OCI-LY7 (cell line): ENCODE measurements at regions of chr5 and their contacts with region 1.

Region 1: DNA sequence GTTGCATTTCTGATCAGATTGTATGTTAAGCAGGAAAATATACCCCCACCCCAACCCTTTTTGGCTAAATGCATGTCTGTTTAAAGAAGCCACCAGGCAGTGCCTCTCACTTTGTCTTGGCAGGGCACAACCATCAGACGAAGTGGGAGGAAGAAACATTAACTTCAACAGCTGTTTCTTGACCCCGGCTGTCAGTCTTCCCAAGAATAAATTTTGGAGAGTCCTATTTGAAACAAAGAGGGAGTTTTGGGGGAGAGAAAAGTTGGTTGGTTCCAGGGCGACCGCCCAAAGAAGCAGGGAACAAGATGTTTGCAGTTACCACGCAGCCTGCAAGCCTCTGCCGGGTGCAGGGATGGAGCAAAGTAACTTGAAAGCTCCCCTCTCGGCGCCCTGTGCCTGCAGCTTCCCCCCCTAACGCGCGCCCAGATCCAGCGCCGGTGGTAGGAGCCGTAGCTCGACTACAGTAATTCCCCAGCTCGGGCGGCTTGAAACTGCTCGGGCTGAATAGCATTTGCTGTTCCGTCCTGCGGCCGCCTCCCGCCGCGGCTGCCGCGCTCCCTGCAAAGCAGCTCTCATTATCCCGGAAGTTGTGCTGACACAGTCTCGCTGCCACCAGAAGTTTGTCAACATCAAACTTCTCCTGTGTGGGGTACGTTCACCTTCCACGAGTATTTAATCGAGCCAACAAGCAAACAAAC is 100.7 kb upstream of the SSBP2 start:
- DNase-seq: peak; percentile 98
- H3K4me3 ChIP-seq: peak overlapping the region; percentile 82
- H3K27ac ChIP-seq: peak overlapping the region; percentile 92
- H3K4me1 ChIP-seq: peaks cover 62% of the 10 kb centered on the region
- CTCF ChIP-seq: no peak

Region 2: GRCh38 chr5:81425569-81425968 is 426.1 kb before region 1 on chr5:
- CTCF ChIA-PET with region 1: no interaction called
- POLR2A ChIA-PET with region 1: interaction called, 5 read pairs
- intact Hi-C with region 1: loop called (anchors 5 kb)
- DNase-seq: peak; percentile 75
- H3K4me3 ChIP-seq: no peak overlapping the region
- H3K27ac ChIP-seq: peak overlapping the region; percentile 24
- H3K4me1 ChIP-seq: peaks cover 13% of the 10 kb centered on the region
- CTCF ChIP-seq: peak; percentile 91

Region 3: DNA sequence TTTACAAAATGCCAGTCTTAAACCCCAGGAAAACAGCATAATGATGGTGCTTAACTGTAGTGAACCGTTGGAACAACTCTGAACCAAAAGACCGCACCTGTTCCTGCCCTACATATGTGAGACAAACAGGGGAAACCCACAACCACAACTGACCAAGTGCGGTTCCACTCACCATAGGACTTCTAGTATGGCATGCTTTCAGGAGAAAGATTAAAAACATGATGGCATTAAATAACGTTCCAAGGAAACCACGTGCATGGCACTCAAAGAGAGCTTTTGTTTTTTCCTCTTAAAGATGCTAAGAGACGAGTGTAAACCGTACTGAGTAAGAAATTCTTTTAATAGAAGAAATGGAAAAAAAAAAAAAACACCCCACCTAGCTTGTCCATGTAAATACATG is 220.5 kb before region 1 on chr5:
- CTCF ChIA-PET with region 1: no interaction called
- POLR2A ChIA-PET with region 1: interaction called, 5 read pairs
- intact Hi-C with region 1: loop called (anchors 10 kb)
- DNase-seq: peak; percentile 84
- H3K4me3 ChIP-seq: peak overlapping the region; percentile 24
- H3K27ac ChIP-seq: peak overlapping the region; percentile 77
- H3K4me1 ChIP-seq: peaks cover 60% of the 10 kb centered on the region
- CTCF ChIP-seq: no peak

Region 4: DNA sequence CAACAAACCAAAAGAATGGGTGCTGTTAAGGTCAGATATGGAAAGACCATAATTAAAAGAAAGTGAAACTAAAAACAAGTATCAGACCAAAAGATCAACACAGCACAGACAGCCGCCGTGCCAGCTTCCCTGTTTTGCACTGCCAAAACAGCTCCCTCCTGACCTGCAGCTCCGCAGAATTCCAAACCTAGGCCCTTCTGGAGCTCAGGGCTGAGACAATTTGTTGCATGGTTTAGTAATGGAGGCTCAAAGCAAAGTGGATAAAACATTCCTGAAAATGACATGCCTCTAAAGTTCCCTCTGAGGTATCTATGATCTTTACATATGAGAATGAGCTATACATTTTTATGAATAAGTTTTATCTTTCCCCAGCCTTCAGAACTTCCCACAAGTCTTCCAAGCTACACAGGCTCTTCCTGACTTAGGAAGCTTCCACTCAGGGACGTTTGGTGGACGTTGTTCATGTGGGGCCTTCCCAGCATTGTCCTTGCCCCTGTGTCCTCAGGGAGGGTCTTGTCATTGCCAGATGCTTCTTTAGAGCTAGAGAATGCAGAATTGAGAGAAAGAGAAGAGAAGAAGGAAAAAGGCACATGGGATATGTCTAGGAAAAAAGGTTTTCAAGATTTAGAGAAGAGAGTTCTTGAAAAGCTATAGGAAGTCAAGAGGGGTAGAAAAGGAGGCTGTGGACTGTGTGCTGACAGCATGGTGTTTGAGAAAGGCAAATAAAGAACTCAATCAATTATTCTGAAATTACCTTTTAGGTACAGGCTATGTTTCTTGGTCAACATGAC is 72.3 kb before region 1 on chr5:
- CTCF ChIA-PET with region 1: interaction called, 3 read pairs
- POLR2A ChIA-PET with region 1: interaction called, 20 read pairs
- intact Hi-C with region 1: no loop called
- DNase-seq: peak; percentile 49
- H3K4me3 ChIP-seq: peak overlapping the region; percentile 62
- H3K27ac ChIP-seq: peak overlapping the region; percentile 2
- H3K4me1 ChIP-seq: peaks cover 17% of the 10 kb centered on the region
- CTCF ChIP-seq: no peak

Region 5: GRCh38 chr5:81838307-81838906 is 13.2 kb before region 1 on chr5:
- CTCF ChIA-PET with region 1: no interaction called
- POLR2A ChIA-PET with region 1: interaction called, 26 read pairs
- intact Hi-C with region 1: no loop called
- DNase-seq: peak; percentile 68
- H3K4me3 ChIP-seq: no peak overlapping the region
- H3K27ac ChIP-seq: no peak overlapping the region
- H3K4me1 ChIP-seq: peaks cover 5% of the 10 kb centered on the region
- CTCF ChIP-seq: peak; percentile 81

Region 6: DNA sequence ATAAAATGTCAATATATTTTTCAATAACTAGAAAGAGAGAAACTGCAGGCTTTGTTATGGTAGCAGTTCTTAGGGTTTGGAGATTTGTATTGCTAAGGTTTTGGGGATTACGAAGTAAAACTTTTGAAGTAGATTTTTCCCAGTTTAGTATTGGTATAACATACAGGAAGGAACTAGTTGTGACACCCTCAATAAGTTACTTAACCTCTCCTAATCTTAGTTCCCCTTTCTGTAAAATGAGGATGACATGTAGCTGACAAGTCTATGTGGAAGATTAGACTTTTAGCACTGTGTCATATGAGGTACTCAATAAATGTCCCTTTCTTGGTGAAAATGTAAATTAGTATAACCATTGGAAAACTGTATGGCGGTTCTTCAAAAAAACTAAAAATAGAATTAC is 46.8 kb after region 1 on chr5:
- CTCF ChIA-PET with region 1: no interaction called
- POLR2A ChIA-PET with region 1: no interaction called
- intact Hi-C with region 1: no loop called
- DNase-seq: no peak
- H3K4me3 ChIP-seq: no peak overlapping the region
- H3K27ac ChIP-seq: no peak overlapping the region
- H3K4me1 ChIP-seq: no peaks in the 10 kb centered on the region
- CTCF ChIP-seq: no peak

Region 7: GRCh38 chr5:82165740-82166530 is 314.3 kb after region 1 on chr5:
- CTCF ChIA-PET with region 1: no interaction called
- POLR2A ChIA-PET with region 1: interaction called, 4 read pairs
- intact Hi-C with region 1: loop called (anchors 5 kb)
- DNase-seq: peak; percentile 76
- H3K4me3 ChIP-seq: no peak overlapping the region
- H3K27ac ChIP-seq: no peak overlapping the region
- H3K4me1 ChIP-seq: no peaks in the 10 kb centered on the region
- CTCF ChIP-seq: peak; percentile 87